CD8-positive, alpha-beta T cell (primary cell): ENCODE measurements at regions of chr20 and their contacts with region 1.

Region 1: GRCh38 chr20:57498425-57499400 is 26.2 kb downstream of the CTCFL start:
- DNase-seq: peak in 5 of 9 experiments; percentile 34 to 61 (median 42)
- ATAC-seq: peak; percentile 74
- H3K4me3 ChIP-seq: no peak overlapping the region
- H3K4me3 Mint-ChIP-seq: no peak overlapping the region
- H3K27ac ChIP-seq: no peak overlapping the region
- H3K27ac Mint-ChIP-seq: no peak overlapping the region
- H3K4me1 ChIP-seq: peaks cover 6% of the 10 kb centered on the region
- H3K4me1 Mint-ChIP-seq: peaks cover 13% of the 10 kb centered on the region
- H3K27me3 ChIP-seq: peaks cover 0 to 4% of the 10 kb centered on the region in 2 experiments
- H3K27me3 Mint-ChIP-seq: peaks cover 32% of the 10 kb centered on the region
- CTCF ChIP-seq: peak; percentile 48

Region 2: DNA sequence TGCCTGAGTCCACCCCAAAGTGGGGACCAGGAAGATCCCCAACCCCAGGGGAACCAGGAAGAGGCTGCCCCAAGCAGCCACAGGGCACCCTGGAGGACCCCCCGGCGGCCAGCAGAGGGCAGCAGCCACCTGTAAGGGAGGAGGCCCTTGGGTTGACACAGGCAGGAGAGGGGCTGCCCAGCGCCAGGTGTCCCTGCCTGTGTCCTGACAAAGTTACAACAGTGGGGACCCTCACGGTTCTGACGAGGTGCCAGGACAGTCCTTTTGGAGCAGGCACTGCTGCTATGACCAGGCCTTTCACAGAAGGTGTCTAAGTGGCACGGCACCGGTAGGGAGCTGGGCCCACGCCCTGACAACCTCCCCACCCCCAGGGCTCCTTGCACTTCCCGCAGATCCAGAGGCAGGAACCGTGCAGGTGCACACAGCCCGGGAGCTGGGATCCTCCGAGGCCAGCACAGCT is 409.0 kb before region 1 on chr20:
- CTCF ChIA-PET with region 1: no interaction called
- POLR2A ChIA-PET with region 1: no interaction called
- intact Hi-C with region 1: loop called (anchors 1 to 10 kb)
- DNase-seq: peak; percentile 19 to 61 (median 50)
- ATAC-seq: peak; percentile 56
- H3K4me3 ChIP-seq: no peak overlapping the region
- H3K4me3 Mint-ChIP-seq: no peak overlapping the region
- H3K27ac ChIP-seq: no peak overlapping the region
- H3K27ac Mint-ChIP-seq: no peak overlapping the region
- H3K4me1 ChIP-seq: peaks cover 6% of the 10 kb centered on the region
- H3K4me1 Mint-ChIP-seq: peaks cover 16% of the 10 kb centered on the region
- H3K27me3 ChIP-seq: no peaks in the 10 kb centered on the region
- H3K27me3 Mint-ChIP-seq: peaks cover 18% of the 10 kb centered on the region
- CTCF ChIP-seq: peak; percentile 61

Region 3: GRCh38 chr20:57374931-57375651 is 123.6 kb before region 1 on chr20:
- CTCF ChIA-PET with region 1: interaction called, 25 read pairs
- POLR2A ChIA-PET with region 1: no interaction called
- intact Hi-C with region 1: no loop called
- DNase-seq: no peak
- ATAC-seq: no peak
- H3K4me3 ChIP-seq: no peak overlapping the region
- H3K4me3 Mint-ChIP-seq: no peak overlapping the region
- H3K27ac ChIP-seq: no peak overlapping the region
- H3K27ac Mint-ChIP-seq: peak overlapping the region; percentile 52
- H3K4me1 ChIP-seq: peaks cover 11% of the 10 kb centered on the region
- H3K4me1 Mint-ChIP-seq: peaks cover 27% of the 10 kb centered on the region
- H3K27me3 ChIP-seq: no peaks in the 10 kb centered on the region
- H3K27me3 Mint-ChIP-seq: no peaks in the 10 kb centered on the region
- CTCF ChIP-seq: no peak

Region 4: DNA sequence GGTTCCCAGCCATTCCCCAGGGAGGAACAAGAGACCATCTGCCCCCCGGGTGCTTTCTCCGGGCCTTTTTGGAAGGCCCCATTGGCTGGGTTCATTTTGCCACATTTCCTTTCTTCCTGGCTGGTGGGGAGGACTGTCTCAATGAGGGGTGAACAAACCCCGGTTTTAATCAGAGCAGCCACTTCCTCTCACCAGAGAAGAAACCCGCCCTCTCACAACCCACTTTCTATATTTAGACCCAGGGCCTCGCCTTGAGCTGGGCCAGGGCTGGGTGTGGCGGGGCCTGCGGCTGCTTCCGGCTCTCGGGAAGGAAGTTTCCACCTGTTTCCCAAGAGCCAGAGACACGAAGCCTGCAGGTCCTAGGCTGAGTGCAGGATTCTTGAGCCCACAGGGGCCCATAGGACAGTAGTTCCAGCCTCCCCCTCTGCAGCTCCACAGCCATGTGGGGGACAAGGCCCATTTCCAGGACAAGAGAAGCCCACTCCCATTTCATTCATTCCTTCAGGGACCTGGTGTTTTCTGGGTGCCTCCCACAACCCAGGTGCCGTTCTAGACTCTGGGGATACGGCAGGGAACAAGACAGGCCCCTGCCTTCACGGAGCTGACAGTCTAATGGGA is 65.7 kb before region 1 on chr20:
- CTCF ChIA-PET with region 1: interaction called, 8 read pairs
- POLR2A ChIA-PET with region 1: no interaction called
- intact Hi-C with region 1: loop called in 1 of 2 experiments (anchors 5 kb)
- DNase-seq: peak; percentile 27 to 87 (median 69)
- ATAC-seq: peak; percentile 86
- H3K4me3 ChIP-seq: peak overlapping the region; percentile 7 to 38
- H3K4me3 Mint-ChIP-seq: peak overlapping the region; percentile 52
- H3K27ac ChIP-seq: peak overlapping the region; percentile 2 to 68
- H3K27ac Mint-ChIP-seq: peak overlapping the region; percentile 67
- H3K4me1 ChIP-seq: peaks cover 55% of the 10 kb centered on the region
- H3K4me1 Mint-ChIP-seq: peaks cover 64% of the 10 kb centered on the region
- H3K27me3 ChIP-seq: no peaks in the 10 kb centered on the region
- H3K27me3 Mint-ChIP-seq: no peaks in the 10 kb centered on the region
- CTCF ChIP-seq: no peak

Region 5: GRCh38 chr20:58598211-58599014 is 1099.7 kb after region 1 on chr20:
- CTCF ChIA-PET with region 1: no interaction called
- POLR2A ChIA-PET with region 1: no interaction called
- intact Hi-C with region 1: no loop called
- DNase-seq: no peak
- ATAC-seq: no peak
- H3K4me3 ChIP-seq: no peak overlapping the region
- H3K4me3 Mint-ChIP-seq: no peak overlapping the region
- H3K27ac ChIP-seq: no peak overlapping the region
- H3K27ac Mint-ChIP-seq: no peak overlapping the region
- H3K4me1 ChIP-seq: no peaks in the 10 kb centered on the region
- H3K4me1 Mint-ChIP-seq: no peaks in the 10 kb centered on the region
- H3K27me3 ChIP-seq: no peaks in the 10 kb centered on the region
- H3K27me3 Mint-ChIP-seq: peaks cover 9% of the 10 kb centered on the region
- CTCF ChIP-seq: no peak